PC-3 (cell line): ENCODE measurements at regions of chr9 and their contacts with region 1.

Region 1: DNA sequence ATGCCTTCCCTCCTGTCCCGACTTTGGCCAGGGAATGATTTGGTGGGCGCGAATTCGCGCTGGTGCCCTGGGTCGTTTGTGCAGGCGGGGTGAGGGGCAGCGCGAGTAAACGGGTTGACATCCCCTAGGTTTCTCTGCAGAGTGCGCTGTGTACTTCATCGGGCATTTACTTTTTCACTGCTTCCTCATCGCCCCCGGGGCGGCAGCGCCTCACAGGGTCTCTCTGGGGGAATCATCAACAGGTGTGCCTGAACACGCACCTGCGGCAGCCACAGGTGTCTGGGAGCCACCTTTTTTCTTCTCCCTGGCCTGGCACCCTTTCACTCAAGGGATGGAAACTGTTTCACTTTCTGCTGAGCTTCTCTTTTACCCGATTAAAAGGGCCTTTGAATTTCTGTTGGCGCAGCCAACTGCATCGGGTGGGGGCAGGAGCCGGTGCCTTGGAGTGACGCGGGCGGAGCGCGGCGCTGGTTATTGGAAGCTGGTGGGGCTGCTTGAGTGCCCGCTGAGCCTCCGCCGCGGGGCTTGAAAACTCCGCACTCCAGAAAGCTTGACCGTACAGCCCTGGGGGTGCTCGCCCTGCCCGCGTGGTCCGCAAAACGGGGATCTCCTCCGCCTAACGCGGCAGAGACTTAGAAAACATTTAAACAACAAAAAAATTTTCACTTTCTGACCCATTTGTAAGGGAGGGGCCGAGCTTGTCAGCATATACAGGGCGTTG is 52.1 kb upstream of the TJP2 start:
- DNase-seq: peak; percentile 48
- ATAC-seq: peak; percentile 38
- H3K4me3 ChIP-seq: peak overlapping the region; percentile 79
- H3K27ac ChIP-seq: peak overlapping the region; percentile 99
- H3K4me1 ChIP-seq: peaks cover 14% of the 10 kb centered on the region
- H3K27me3 ChIP-seq: no peaks in the 10 kb centered on the region
- CTCF ChIP-seq: no peak

Region 2: DNA sequence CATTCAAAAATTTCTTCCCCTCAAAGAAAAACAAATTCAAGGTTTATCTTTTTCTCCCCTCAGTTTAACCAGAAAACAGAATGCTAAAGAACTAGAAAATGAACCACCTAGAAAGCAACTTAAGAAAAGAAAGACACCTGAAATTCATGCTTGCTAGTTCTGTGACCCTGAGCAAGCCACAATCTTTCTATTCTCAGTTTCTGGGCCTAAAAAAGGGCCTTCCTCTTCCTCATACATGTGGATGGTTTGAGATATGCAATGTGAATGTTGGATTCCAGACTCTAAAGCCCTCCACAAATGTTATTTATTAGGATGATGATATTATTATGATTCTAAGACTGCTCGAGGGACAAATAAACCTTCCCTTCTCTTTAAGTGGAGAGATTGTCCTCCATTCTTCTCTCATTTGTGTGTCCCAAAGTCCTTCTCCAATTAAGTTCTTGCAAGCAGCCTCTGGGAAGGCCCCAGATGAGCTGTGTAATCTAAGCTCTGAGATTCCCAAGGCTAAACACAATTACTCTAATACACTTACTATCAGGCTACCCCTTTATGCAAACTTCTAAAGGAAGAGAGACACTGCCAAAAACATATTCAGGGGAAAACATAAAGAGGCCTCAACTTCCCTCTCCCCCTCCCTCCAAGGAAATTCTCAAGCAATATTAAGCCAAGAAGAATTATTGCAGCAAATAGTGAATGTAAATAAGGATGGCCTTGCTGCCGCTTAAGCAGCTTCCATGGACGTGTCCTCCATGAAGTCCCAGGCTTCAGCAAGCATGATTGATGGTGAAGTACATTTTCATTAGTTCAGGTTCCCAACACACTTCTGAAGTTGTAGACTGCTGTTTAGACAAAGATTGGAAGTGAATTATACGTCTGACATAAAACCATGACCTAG is 188.3 kb before region 1 on chr9:
- CTCF ChIA-PET with region 1: no interaction called
- POLR2A ChIA-PET with region 1: no interaction called
- intact Hi-C with region 1: no loop called
- DNase-seq: no peak
- ATAC-seq: no peak
- H3K4me3 ChIP-seq: no peak overlapping the region
- H3K27ac ChIP-seq: no peak overlapping the region
- H3K4me1 ChIP-seq: no peaks in the 10 kb centered on the region
- H3K27me3 ChIP-seq: peaks cover 20% of the 10 kb centered on the region; the same call in 1 of the 2 replicates
- CTCF ChIP-seq: no peak

Region 3: DNA sequence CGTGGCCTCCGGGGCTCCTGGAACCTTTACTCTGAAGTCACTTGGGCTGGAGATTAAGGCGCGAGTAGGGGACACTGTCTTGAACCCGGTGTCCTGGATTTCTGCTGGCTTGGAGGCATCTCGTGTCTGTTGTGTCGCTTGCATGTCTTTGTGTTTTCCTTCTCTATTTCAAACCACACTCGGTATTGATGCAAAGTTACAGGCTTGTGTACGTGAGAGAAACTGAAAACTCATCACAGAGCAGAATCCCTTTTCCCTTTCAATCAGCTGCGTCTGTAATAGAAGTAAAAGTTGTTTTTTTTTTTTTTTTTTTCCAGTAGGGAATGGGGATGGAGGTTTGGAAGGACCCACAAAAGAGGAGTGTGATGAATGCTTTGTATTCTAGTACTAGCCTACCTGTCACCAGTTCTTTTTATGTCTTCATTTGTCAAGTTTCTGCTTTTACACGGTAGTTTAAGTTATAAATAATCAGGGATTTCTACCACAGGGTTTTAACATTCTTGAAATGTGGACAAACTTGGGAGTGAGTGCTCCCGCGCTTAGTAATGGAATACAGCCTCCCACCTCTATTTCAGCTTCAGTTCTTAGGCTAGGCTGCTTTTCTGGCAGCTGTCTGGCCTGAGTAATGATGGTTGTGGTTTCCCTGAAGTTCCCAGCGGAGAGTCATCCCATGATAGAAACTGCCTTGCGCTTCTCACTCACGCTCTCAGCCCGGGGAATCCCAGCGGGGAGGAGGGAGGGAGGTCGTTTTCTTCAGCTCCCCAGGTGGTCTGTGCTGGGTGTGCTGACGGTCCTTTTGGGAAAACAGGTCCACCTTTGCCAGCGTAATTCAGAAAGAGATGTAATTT is 52.9 kb after region 1 on chr9:
- CTCF ChIA-PET with region 1: no interaction called
- POLR2A ChIA-PET with region 1: no interaction called
- intact Hi-C with region 1: loop called (anchors 5 kb)
- DNase-seq: peak; percentile 91
- ATAC-seq: peak; percentile 66
- H3K4me3 ChIP-seq: peak overlapping the region; percentile 50; the same call in 1 of the 2 replicates
- H3K27ac ChIP-seq: peak overlapping the region; percentile 93
- H3K4me1 ChIP-seq: peaks cover 91% of the 10 kb centered on the region
- H3K27me3 ChIP-seq: no peaks in the 10 kb centered on the region
- CTCF ChIP-seq: no peak

Region 4: DNA sequence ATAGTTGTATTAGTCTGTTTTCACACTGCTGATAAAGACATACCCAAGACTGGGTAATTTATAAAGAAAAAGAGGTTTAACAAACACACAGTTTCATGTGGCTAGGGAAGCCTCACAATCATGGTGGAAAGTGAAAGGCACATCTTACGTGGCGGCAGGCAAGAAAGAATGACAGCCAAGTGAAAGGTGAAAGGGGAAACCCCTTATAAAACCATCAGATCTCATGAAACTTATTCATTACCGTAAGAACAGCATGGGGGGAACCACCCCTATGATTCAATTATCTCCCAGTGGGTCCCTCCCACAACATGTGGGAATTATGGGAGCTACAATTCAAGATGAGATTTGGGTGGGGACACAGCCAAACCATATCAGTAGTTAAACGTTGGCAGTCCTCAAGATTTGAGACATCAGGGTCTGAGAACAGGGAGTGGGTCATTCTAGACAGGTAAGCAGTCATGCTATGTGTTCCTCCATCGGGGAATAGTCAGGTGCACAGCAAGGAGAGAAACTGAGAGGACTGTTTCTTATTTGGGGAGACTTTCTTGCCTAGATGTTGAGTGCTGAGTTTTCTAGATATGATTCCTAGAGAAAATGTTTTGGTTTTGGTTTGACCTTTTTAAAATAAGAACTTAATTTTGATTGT is 157.2 kb after region 1 on chr9:
- CTCF ChIA-PET with region 1: no interaction called
- POLR2A ChIA-PET with region 1: no interaction called
- intact Hi-C with region 1: no loop called
- DNase-seq: no peak
- ATAC-seq: no peak
- H3K4me3 ChIP-seq: no peak overlapping the region
- H3K27ac ChIP-seq: no peak overlapping the region
- H3K4me1 ChIP-seq: no peaks in the 10 kb centered on the region
- H3K27me3 ChIP-seq: no peaks in the 10 kb centered on the region
- CTCF ChIP-seq: no peak